Posterior vena cava (tissue), 2 donors: ENCODE measurements at regions of chr16 and their contacts with region 1.

Region 1: DNA sequence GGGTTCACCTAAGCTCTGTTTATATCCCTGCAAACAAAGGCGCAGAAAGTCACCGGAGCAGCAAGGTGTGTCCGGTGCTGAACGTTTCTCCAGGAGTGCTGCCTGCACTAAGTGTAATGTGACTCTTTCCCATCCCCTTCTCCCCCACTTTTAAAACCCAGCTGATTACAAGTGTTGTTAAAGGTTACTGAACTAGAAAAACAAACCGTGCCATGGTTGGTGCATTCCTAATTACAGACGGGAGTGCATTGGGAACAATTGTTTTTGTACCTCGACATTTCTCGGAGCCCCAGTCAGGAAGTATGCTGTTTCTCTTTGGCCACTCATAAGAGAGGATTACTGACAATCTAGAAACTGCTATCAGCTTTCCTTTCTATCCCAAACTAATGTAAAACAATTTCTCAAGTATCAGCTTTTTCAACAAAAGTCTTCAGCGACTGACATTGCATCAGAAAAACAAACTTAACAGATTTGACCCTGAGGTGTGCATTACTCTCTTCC is 441.0 kb upstream of the SALL1 start:
- DNase-seq: no peak

Region 2: DNA sequence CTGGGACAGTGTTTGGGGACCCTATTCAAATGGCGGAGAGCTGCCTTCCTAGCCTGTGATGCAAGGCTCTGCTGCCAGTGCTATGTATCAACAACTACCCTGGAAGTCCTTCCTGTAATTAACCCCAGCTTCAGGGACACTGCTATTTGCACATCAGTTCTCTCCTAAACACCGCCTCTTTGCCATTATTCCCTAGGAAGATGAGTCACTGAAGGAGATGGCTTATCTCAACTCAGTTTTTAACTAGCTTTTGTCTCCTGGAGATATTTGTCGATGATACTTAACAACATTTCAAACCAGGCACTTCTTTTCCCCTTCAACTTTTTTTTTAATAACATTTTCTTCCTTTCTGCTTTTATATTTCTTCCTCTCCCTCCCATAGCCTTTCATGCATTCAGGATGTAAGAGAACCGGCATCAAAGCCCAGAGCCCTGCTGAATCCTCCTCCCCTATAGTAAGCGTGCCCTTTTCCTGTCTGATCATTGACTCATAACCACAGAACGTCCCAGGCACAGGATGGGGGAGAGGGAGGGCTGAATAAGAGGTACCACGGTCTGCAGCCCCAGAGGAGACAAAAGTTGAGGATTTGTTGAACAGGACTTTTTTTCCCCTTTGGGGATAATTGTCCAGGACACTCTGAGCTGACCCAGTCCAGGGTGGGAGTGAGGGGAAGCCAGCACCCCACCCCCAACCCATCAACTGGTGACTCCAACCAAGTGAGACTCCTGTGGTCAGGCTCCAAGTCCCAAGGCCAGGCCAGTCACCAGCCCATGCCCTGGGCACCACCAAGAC is 53.1 kb before region 1 on chr16:
- intact Hi-C with region 1: loop called in 1 of 2 experiments (anchors 10 kb)
- DNase-seq: no peak

Region 3: DNA sequence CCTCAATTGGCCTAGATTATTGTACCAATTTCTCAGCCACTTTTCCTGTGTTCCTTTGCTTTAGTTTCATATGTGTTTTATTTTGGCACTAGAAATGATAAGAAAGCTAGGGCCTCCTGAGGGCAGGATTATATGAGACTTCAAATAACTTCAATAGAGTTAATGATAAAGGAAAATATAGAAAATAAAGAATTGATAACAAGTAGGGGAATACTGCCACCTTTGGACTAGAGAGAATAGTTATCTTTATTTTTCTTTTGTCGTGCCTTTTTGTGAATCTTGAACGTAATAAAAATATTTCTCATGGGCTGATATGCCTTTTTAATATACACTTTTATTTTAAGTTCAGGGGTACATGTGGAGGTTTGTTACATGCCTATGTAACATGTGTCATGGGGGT is 1812.9 kb after region 1 on chr16:
- intact Hi-C with region 1: no loop called
- DNase-seq: no peak